T-cell (primary cell): ENCODE measurements at regions of chr3 and their contacts with region 1.

Region 1: GRCh38 chr3:136938334-136938733 is 19.4 kb upstream of the IL20RB start:
- DNase-seq: no peak
- ATAC-seq: no peak
- H3K4me3 ChIP-seq: no peak overlapping the region
- H3K4me3 Mint-ChIP-seq: no peak overlapping the region
- H3K27ac ChIP-seq: no peak overlapping the region
- H3K27ac Mint-ChIP-seq: no peak overlapping the region
- H3K4me1 ChIP-seq: peaks cover 2 to 10% of the 10 kb centered on the region in 2 experiments
- H3K4me1 Mint-ChIP-seq: peaks cover 74 to 82% (median 81%) of the 10 kb centered on the region in 3 donors
- H3K27me3 ChIP-seq: no peaks in the 10 kb centered on the region
- H3K27me3 Mint-ChIP-seq: no peaks in the 10 kb centered on the region

Region 2: DNA sequence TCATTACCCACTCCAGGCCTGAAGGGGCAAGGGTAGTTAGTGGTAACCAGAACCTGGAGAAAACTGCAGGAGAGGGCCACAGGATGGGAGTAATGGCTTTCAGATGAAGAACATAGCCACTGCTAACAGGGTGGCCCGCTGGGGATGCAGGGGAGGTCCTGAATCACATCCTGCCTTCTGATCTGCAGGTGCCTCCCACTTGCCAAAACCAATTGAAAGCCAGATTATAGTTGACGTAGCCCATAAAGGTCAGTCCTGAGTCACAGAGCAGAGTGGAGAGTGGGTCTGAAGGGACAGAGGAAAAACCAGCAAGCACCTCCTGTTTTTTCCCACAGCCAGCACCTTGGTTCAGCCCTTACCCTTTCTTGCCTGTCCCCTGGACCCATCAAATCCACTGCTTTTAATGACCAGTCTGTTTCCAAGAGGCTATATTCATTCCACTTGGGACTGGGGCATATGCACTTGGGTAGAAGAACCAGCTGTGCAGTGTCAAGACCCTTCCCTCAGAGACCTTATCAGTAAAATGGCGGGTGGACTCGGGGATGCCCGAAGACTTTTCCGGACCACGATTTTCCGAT is 120.1 kb before region 1 on chr3:
- CTCF ChIA-PET with region 1: no interaction called
- POLR2A ChIA-PET with region 1: interaction called in 1 of 2 experiments, 13 read pairs
- DNase-seq: peak in 8 of 35 experiments; percentile 0 to 37 (median 4)
- ATAC-seq: peak; percentile 26 to 65 (median 34)
- H3K4me3 ChIP-seq: peak overlapping the region; percentile 59 to 89
- H3K4me3 Mint-ChIP-seq: peak overlapping the region; percentile 80 to 88 (median 83)
- H3K27ac ChIP-seq: no peak overlapping the region
- H3K27ac Mint-ChIP-seq: no peak overlapping the region
- H3K4me1 ChIP-seq: peaks cover 0 to 23% of the 10 kb centered on the region in 2 experiments
- H3K4me1 Mint-ChIP-seq: peaks cover 16 to 21% (median 19%) of the 10 kb centered on the region in 3 donors
- H3K27me3 ChIP-seq: peaks cover 0 to 27% of the 10 kb centered on the region in 2 experiments
- H3K27me3 Mint-ChIP-seq: peaks cover 46 to 51% of the 10 kb centered on the region in 2 donors